ENCODE measurements at regions of chr15 and their contacts with region 1.

Region 1: DNA sequence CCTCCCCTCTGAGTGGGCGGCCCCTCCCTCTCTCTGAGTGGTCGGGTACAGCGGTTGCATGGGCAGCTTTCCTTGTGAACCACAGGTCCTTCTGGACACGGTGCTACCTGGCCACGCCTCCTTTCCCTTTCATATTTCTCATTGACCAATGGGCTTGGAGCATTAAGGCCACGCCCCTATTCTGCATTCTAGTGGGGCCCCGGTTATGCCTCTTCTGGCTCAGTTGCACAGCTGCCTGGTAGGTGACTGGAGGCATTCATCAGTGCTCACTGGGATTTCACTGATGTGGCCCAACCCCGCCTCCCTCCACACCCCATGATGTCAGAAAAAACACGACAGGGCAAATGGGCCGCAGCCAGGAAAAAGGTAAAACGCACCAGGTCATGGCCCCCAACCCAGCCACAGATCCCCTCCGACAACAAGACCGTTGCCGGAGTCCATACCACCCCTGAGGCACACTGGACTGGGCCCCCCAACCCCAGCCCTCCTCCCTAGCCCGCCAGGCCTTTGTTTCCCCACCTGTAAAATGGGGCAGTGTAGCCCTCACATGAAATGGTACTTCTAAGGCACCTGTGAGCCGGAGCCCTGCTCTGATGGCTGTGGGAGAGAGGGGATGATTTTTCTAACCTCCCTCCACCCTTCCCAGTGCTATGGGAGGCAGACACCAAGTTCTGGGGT is 26.3 kb downstream of the NGRN start:
- DNase-seq: no peak
- H3K4me3 ChIP-seq: no peak overlapping the region
- H3K27ac ChIP-seq: no peak overlapping the region
- H3K27me3 ChIP-seq: peaks cover 2% of the 10 kb centered on the region
- CTCF ChIP-seq: no peak

Region 2: GRCh38 chr15:90306560-90306959 is 14.7 kb after region 1 on chr15:
- CTCF ChIA-PET with region 1: interaction called, 25 read pairs
- POLR2A ChIA-PET with region 1: no interaction called
- DNase-seq: no peak
- H3K4me3 ChIP-seq: no peak overlapping the region
- H3K27ac ChIP-seq: no peak overlapping the region
- H3K27me3 ChIP-seq: no peaks in the 10 kb centered on the region
- CTCF ChIP-seq: no peak

Region 3: GRCh38 chr15:90352109-90352893 is 60.5 kb after region 1 on chr15 and contains the start of gene ZNF774:
- CTCF ChIA-PET with region 1: no interaction called
- POLR2A ChIA-PET with region 1: no interaction called
- DNase-seq: peak; percentile 88
- H3K4me3 ChIP-seq: peak within 1 kb of the TSS; percentile 91
- H3K27ac ChIP-seq: no peak within 1 kb of the TSS
- H3K27me3 ChIP-seq: no peaks in the 10 kb centered on the region
- CTCF ChIP-seq: no peak
- polyA plus RNA-seq, gene ZNF774: 1.1 and 2.3 TPM in 2 replicates